Sigmoid colon (tissue), 7 donors: ENCODE measurements at regions of chr14 and their contacts with region 1.

Region 1: DNA sequence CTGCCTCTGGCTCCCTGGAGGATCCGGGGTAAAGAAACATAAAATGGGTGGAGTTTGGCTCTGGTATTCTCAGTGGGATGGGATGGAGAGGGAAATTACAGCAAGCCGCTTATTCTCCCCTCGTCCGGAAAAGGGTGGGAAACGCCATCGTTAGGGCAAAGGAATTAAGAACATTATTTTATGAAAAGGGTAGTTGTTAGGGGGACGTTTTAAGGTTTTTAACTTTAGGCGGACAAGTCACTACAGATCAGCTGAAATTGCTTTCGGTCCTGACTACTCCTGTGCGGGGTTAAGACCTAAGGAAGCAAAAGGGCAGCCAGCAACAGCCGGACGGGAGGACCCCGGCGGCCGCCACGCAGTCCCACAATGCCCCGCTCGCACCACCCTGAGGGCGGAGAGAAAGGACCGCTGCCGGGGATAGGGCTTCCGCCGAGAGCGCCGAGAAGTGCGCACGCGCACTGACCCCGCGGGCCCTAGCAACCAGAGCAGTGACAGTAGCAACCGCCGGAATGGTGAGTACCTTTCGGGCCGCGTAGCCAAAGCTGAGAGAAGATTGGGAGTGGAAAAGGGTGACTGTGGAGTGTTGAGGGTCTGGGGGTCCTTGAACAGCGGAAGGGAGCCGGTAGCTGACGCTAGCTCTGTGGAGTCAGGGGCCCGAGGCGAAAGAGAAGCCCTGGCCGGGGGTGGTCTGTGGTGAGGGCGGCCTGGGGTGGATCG is at the start of gene DNAL1:
- DNase-seq: peak; percentile 96
- H3K4me3 ChIP-seq: peak within 1 kb of the TSS; percentile 53 to 73 (median 71)
- H3K27ac ChIP-seq: peak within 1 kb of the TSS; percentile 85 to 91 (median 88)
- H3K4me1 ChIP-seq: peaks cover 0 to 20% (median 15%) of the 10 kb centered on the region in 4 donors
- H3K27me3 ChIP-seq: no peaks in the 10 kb centered on the region
- CTCF ChIP-seq: no peak
- EP300 ChIP-seq: no peak
- POLR2A ChIP-seq: peak; percentile 60 to 64
- total RNA-seq, gene DNAL1: 5.6 to 20.0 (median 9.6) TPM

Region 2: DNA sequence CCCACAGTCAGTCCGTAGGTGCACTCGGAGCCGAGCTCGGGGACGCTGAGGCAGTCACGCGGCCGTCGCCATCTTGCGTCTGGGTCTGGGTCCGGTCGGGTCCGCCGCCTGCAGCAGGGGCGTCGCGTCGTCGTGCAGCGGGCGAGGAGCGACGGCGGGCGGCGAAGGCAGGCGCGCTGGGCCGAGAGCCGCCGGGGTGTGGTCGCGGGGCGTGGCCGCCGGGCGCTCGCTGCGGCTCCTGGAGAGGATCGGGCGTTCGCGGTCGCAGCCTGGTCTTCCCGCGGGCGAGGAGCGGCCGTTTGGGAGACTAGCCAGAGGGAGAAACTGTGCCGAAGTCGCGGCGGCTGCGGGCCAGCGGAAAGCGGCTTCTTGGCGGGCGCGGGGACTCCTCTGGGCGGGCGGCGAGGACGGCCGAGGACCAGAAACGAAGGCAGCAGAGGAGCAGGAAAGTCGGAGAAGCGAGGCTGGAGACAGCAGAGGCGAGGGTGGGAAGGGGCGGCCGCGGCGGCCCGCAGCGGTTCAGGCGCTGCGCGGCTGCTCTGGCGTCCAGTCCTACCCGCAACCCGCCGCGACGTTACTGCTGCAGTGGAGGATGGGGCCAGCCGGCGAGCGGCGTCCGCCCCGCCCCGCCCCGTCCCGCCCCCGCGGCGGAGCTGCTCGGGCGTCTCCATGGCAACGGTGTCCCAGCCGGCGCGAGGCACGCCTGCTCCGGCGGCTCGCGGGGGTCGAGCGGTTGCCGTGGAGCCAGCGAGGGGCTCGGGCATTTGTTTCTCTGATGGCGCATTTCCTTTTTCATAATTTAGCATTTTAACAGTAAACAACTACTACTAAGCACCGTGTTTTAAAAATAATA is 69.3 kb after region 1 on chr14 and contains the start of gene PNMA1:
- intact Hi-C with region 1: loop called (anchors 5 kb)
- DNase-seq: peak; percentile 95
- H3K4me3 ChIP-seq: peak within 1 kb of the TSS; percentile 66 to 94 (median 80)
- H3K27ac ChIP-seq: peak within 1 kb of the TSS; percentile 90 to 99 (median 95)
- H3K4me1 ChIP-seq: peaks cover 0 to 63% (median 50%) of the 10 kb centered on the region in 4 donors
- H3K27me3 ChIP-seq: no peaks in the 10 kb centered on the region
- CTCF ChIP-seq: no peak
- EP300 ChIP-seq: no peak
- POLR2A ChIP-seq: peak; percentile 49 to 50
- total RNA-seq, gene PNMA1: 33.5 to 63.1 (median 37.3) TPM